Activated T-helper 1 cell treated with anti-CD3 and anti-CD28 coated beads, Interleukin-12 subunit alpha, Interleukin-12 subunit beta, Interleukin-2, Interleukin-4 antibody, amounts not matched to agents 30 ng/mL and 10 ng/mL and 1 ng/mL, durations not matched to agents 14 hours and 24 hours and 36 hours (primary cell): ENCODE measurements at regions of chr3 and their contacts with region 1.

Region 1: DNA sequence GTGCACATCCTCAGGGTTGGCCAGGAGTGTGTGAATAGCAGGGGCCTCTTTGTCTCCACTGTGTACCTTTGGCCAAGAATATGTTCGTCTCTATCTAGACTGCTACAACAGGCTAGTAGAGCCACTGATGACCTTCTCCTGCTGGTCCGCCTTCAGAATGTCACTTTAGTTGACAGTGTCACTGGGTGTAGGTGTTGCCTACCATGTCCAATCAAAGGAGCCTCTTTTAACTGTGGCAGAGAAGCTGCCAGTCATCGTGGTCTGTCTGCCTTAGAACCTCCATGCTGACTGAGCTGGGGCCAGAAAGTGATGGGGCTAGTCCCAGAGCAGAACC is 40.1 kb downstream of the OXSR1 start:
- DNase-seq: peak; percentile 16
- H3K4me3 Mint-ChIP-seq: peak overlapping the region; percentile 38
- H3K27ac Mint-ChIP-seq: peak overlapping the region; percentile 80
- H3K4me1 Mint-ChIP-seq: peaks cover 73% of the 10 kb centered on the region
- H3K27me3 Mint-ChIP-seq: no peaks in the 10 kb centered on the region

Region 2: GRCh38 chr3:37064747-37065146 is 1140.7 kb before region 1 on chr3:
- intact Hi-C with region 1: no loop called
- DNase-seq: no peak
- H3K4me3 Mint-ChIP-seq: no peak overlapping the region
- H3K27ac Mint-ChIP-seq: no peak overlapping the region
- H3K4me1 Mint-ChIP-seq: peaks cover 9% of the 10 kb centered on the region
- H3K27me3 Mint-ChIP-seq: no peaks in the 10 kb centered on the region

Region 3: GRCh38 chr3:38173834-38174418 is 31.5 kb before region 1 on chr3:
- intact Hi-C with region 1: loop called (anchors 1 kb)
- DNase-seq: no peak
- H3K4me3 Mint-ChIP-seq: peak overlapping the region; percentile 38
- H3K27ac Mint-ChIP-seq: peak overlapping the region; percentile 36
- H3K4me1 Mint-ChIP-seq: peaks cover 60% of the 10 kb centered on the region
- H3K27me3 Mint-ChIP-seq: no peaks in the 10 kb centered on the region